Activated naive CD4-positive, alpha-beta T cell treated with anti-CD3 and anti-CD28 coated beads, Interleukin-2, amount 10 ng/mL, durations not matched to agents 7 days and 5 days (primary cell): ENCODE measurements at regions of chr1 and their contacts with region 1.

Region 1: DNA sequence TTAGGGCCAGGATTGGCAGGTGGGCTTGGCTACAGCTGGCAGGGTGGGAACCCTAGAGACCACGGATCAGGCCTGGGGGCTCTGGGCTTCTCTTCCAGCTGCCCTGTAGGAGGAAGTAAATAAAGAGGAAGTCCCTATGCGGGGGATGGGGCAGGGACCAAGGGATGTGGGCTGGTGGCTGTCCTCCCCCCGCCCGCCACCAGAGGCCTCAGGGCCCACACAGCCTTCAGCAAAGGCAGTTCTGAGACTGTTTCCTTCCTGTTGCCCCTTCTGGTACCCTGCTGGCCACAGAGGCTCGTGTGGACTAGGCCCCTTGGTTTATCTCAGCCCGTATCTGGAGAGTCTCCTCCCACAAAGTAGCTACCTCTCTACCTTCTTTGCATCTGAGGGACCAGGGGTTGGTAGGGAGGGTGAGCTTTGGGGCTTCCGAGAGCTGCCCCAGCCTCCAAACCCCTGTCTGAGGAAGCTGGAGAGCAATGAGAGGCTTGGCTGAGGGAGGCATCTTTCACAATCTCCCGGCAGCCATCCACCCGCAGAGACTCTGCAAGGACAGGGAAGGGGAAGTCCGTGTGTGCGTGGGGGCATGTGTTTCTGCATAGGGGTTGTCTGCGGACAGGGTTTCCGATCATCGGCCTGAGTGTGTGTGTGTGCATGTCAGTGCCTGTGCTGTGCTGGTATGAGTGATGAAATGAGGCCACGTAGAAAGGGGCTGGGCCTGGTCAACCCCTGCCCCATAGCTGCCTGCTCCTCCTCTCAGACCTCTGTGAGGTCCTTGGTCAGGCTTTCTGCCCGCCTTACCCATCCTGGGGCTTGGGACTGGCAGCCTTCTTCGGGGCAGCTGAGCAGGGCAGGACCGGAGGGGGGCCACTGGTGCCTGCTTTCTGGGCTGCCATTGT is 12.5 kb downstream of the RPS6KA1 start:
- DNase-seq: peak; percentile 87
- H3K4me3 Mint-ChIP-seq: peak overlapping the region; percentile 68
- H3K27ac Mint-ChIP-seq: peak overlapping the region; percentile 91
- H3K4me1 Mint-ChIP-seq: peaks cover 93% of the 10 kb centered on the region
- H3K27me3 Mint-ChIP-seq: no peaks in the 10 kb centered on the region

Region 2: GRCh38 chr1:26391450-26391849 is 150.6 kb before region 1 on chr1:
- CTCF ChIA-PET with region 1: no interaction called
- DNase-seq: peak; percentile 77
- H3K4me3 Mint-ChIP-seq: no peak overlapping the region
- H3K27ac Mint-ChIP-seq: no peak overlapping the region
- H3K4me1 Mint-ChIP-seq: peaks cover 49% of the 10 kb centered on the region
- H3K27me3 Mint-ChIP-seq: peaks cover 22% of the 10 kb centered on the region

Region 3: GRCh38 chr1:26500488-26501175 is 41.4 kb before region 1 on chr1:
- CTCF ChIA-PET with region 1: interaction called, 51 read pairs
- DNase-seq: peak; percentile 91
- H3K4me3 Mint-ChIP-seq: peak overlapping the region; percentile 83
- H3K27ac Mint-ChIP-seq: peak overlapping the region; percentile 95
- H3K4me1 Mint-ChIP-seq: peaks cover 37% of the 10 kb centered on the region
- H3K27me3 Mint-ChIP-seq: no peaks in the 10 kb centered on the region

Region 4: DNA sequence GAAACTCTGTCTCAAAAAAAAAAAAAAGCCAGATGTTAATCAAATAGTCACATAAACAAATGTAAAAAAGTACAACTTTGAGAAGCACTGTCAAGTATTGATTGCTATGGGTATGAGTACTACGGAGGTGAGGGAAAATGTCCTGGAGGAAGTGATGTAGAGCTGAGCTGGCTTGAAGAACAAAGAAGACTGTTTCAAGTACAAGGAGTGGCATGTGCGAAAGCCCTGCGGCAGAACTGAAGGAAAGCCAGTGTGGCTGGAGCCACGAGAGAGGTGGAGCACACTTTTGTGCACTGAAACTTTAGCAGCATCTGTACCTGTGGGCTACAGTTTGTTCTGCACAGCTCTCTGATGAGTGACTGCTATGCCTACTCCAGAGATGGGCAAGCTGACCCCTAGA is 17.9 kb before region 1 on chr1:
- CTCF ChIA-PET with region 1: interaction called, 25 read pairs
- DNase-seq: no peak
- H3K4me3 Mint-ChIP-seq: no peak overlapping the region
- H3K27ac Mint-ChIP-seq: no peak overlapping the region
- H3K4me1 Mint-ChIP-seq: peaks cover 10% of the 10 kb centered on the region
- H3K27me3 Mint-ChIP-seq: peaks cover 71% of the 10 kb centered on the region

Region 5: GRCh38 chr1:26529655-26530409 is 12.2 kb before region 1 on chr1 and contains the start of gene RPS6KA1:
- CTCF ChIA-PET with region 1: interaction called, 25 read pairs
- DNase-seq: peak; percentile 77
- H3K4me3 Mint-ChIP-seq: peak within 1 kb of the TSS; percentile 82
- H3K27ac Mint-ChIP-seq: peak within 1 kb of the TSS; percentile 73
- H3K4me1 Mint-ChIP-seq: peaks cover 39% of the 10 kb centered on the region
- H3K27me3 Mint-ChIP-seq: peaks cover 28% of the 10 kb centered on the region

Region 6: DNA sequence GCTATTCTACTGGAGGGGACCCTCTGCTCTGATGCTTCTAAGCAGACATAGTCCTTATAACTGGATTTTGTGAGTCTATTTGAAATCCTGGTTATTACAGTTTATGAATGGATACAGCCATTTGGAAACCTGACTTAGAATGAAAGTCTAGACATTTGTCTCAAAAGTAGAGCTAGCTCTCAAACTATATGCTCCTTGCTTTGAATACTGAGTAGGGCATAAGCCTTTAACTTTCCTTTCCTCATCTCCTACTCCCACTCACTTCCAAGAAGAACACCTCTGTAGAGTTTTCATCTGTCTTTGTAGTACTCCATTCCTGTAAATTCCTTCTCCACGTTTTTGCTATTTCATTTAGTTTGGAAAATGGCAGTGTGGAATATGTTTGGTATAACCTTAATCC is 144.7 kb after region 1 on chr1:
- CTCF ChIA-PET with region 1: no interaction called
- DNase-seq: no peak
- H3K4me3 Mint-ChIP-seq: no peak overlapping the region
- H3K27ac Mint-ChIP-seq: no peak overlapping the region
- H3K4me1 Mint-ChIP-seq: peaks cover 13% of the 10 kb centered on the region
- H3K27me3 Mint-ChIP-seq: no peaks in the 10 kb centered on the region